KBM-7 (cell line): ENCODE measurements at regions of chr1 and their contacts with region 1.

Region 1: DNA sequence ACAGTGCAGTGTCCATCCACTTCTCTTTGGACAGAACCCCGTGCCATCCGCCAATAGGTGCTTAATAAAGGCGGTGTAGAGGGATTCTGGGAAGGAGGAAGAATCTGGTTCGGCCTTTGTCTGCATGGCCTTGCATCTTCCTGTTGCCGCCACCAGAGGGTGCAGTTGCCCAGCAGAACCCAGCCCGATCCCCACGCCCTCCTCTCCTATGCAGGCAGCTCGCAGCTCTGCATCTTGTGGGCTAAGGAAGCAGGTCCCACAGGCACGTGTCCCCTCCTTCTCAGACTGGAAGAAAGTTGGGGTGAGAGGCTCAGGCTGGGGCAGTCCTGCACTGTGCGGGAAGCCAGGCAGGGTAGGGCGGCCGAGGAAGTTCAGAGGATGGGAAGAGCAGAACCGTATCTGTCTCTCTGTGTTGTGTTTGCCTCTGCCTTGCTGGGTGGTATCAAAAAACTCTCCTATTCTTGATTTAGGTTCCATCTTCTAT is 20.8 kb downstream of the NAV1 start:
- DNase-seq: peak; percentile 81

Region 2: DNA sequence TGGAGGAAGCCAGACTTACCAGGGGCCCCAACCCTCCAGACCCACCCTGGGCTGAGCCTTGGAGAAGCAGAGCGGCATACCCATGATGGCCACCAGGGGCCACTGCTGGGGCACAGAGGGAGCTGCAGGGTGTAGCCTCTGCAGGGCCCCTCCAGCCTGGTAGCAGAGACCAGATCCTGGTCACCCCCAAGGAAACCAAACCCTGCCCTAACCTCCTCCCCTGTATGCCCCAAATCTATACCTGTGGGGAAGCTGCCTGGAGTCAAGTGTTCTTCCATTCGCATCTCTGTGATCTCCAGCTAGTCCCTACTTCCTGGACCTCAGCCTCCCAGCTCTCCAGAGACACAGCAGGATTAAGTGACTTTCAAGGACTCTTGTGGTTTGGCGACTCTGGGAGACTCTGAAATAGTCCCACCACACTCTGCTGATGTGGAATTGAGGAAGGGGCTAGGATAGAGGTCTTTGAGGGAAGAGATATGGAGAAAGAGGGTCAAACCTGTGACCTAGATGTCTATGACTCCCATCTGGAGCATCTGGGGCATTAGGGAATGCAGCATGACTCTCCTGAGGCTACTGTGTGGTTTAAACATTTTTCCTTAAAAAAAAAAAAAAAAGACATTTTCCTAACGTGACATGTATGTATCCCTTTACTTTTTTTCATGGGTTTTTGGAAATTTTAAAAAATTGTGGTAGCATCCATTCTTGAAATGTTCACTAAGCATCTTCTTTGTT is 150.0 kb after region 1 on chr1:
- in situ Hi-C with region 1: loop called (anchors 10 kb)
- DNase-seq: peak; percentile 65

Region 3: GRCh38 chr1:201792534-201793305 is 233.0 kb after region 1 on chr1:
- in situ Hi-C with region 1: loop called (anchors 10 kb)
- DNase-seq: peak; percentile 84